Spleen (tissue), 13 donors: ENCODE measurements at regions of chr22 and their contacts with region 1.

Region 1: GRCh38 chr22:43993027-43993760 is 30.9 kb upstream of the PARVB start:
- DNase-seq: peak; percentile 85
- H3K4me3 ChIP-seq: no peak overlapping the region
- H3K27ac ChIP-seq: no peak overlapping the region
- H3K4me1 ChIP-seq: peaks cover 14 to 49% (median 29%) of the 10 kb centered on the region in 6 donors
- H3K27me3 ChIP-seq: no peaks in the 10 kb centered on the region
- CTCF ChIP-seq: peak; percentile 83 to 98 (median 96)
- POLR2A ChIP-seq: no peak

Region 2: GRCh38 chr22:43796567-43796966 is 196.6 kb before region 1 on chr22:
- intact Hi-C with region 1: no loop called
- DNase-seq: no peak
- H3K4me3 ChIP-seq: no peak overlapping the region
- H3K27ac ChIP-seq: no peak overlapping the region
- H3K4me1 ChIP-seq: no peaks in the 10 kb centered on the region
- H3K27me3 ChIP-seq: peaks cover 0 to 7% (median 0%) of the 10 kb centered on the region in 7 donors
- CTCF ChIP-seq: peak in 1 of 11 experiments; percentile 22
- POLR2A ChIP-seq: no peak

Region 3: DNA sequence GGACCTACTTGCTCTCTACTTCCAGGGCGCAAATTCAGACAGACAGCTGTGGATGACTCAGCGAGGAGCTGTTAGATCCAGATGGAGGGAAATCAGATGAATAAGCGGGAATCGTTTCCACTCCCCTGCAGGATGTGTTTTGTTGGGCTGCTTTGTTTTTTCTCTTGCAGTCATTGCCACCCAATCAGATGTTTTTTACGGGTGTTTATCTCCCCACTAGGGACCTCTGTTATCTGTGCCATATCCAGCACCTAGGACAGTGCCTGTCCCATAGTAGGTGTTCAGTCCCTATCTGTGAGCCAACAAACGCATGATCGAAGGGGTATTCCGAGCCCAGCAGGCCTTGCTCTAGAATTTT is 136.4 kb after region 1 on chr22:
- intact Hi-C with region 1: no loop called
- DNase-seq: peak; percentile 6
- H3K4me3 ChIP-seq: no peak overlapping the region
- H3K27ac ChIP-seq: no peak overlapping the region
- H3K4me1 ChIP-seq: peaks cover 0 to 22% (median 12%) of the 10 kb centered on the region in 6 donors
- H3K27me3 ChIP-seq: no peaks in the 10 kb centered on the region
- CTCF ChIP-seq: no peak
- POLR2A ChIP-seq: no peak

Region 4: DNA sequence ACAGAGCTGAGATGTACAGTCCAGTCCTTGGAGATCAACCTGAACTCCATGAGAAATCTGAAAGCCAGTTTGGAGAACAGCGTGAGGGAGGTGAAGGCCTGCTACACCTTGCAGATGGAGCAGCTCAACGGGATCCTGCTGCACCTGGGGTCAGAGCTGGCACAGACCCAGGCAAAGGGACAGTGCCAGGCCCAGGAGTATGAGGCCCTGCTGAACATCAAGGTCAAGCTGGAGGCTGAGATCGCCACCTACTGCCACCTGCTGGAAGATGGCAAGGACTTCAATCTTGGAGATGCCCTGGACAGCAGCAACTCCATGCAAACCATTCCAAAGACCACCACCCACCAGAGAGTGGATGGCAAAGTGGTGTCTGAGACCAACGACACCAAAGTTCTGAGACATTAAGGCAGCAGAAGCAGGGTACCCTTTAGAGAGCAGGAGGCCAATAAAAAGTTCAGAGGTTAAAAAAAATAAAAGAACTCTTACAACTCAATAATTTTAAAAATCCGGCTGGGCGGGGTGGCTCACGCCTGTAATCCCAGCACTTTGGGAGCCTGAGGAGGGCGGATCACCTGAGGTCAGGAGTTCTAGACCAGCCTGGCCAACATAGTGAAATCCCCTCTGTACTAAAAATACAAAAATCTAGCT is 574.8 kb after region 1 on chr22:
- intact Hi-C with region 1: loop called (anchors 5 kb)
- DNase-seq: peak; percentile 79
- H3K4me3 ChIP-seq: no peak overlapping the region
- H3K27ac ChIP-seq: no peak overlapping the region
- H3K4me1 ChIP-seq: peaks cover 0 to 10% (median 0%) of the 10 kb centered on the region in 6 donors
- H3K27me3 ChIP-seq: peaks cover 0 to 18% (median 0%) of the 10 kb centered on the region in 7 donors
- CTCF ChIP-seq: peak in 10 of 11 experiments; percentile 27 to 71 (median 54)
- POLR2A ChIP-seq: no peak

Region 5: DNA sequence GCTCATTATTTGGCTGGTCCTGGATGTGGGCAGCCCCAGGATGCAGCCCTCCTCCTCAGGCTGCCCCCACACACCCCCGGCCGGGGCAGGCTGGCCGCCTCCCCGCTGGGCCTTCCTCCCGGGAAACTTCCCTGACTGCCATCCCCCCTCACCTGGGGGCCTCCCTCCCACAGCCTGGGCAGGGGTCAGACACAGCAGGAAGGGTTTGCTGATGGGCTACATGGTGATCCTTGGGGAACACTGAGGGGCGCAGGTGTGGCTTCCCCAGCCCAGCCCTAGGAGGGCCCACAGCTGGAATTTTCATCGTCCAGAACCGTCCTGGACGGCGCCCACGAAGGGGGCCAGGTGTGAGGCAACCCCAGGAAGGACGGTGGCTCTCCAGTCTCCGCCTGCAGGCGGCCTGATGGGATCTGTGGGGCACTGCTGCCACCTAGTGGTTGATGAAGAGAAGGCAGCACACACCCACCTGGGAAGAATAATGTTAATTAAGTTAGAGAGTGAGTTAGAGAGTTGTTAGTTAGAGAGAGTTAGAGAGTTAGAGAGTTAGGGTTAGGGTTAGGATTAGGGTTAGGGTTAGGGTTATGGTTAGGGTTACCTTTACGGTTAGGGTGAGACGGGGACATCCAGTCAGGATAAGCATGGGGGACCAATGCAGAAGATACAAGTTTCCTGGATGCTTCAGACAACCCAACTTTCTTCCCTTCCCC is 632.9 kb after region 1 on chr22:
- intact Hi-C with region 1: loop called (anchors 2 kb)
- DNase-seq: peak; percentile 92
- H3K4me3 ChIP-seq: no peak overlapping the region
- H3K27ac ChIP-seq: no peak overlapping the region
- H3K4me1 ChIP-seq: peaks cover 0 to 11% (median 7%) of the 10 kb centered on the region in 6 donors
- H3K27me3 ChIP-seq: peaks cover 0 to 47% (median 0%) of the 10 kb centered on the region in 7 donors
- CTCF ChIP-seq: peak; percentile 94 to 100 (median 98)
- POLR2A ChIP-seq: no peak